ENCODE measurements at regions of chr12 and their contacts with region 1.

Region 1: DNA sequence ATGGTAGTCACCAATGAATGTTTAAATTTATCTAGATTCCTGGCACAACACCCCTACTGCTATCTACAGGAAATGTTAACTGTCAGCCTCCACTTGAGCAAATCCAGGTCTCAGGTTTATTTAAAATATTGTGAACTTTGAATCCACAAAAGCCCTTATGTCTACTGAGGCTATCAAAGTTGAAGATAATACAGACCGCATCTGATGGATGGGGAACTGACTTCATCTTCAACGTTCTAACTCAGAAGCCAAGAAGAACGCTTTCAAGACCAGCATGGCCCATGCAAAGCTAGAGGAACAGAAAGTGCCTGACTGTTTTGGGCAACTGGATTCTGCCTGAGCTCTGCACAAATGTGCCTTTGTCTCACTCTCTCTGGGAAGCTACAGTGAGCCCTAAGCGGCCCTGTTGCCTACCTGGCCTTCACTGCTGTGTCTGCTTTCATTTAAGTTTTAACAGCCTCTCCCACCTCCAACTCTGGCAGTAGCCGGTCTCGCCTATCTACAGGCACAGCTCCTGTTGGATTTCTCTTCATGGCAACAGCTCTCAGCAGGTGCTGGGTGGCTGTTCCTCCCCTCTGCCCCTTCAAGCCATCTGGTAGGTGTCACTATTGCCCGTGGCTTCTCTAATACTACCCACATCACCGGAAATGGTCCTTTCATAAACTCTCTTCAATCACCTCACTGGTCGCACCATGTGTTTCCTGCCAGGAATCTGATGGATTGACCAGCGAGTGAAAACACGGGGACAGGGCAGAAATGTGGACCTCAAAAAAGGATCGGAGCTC is 112.1 kb upstream of the OVCH1 start:
- DNase-seq: no peak
- H3K4me3 Mint-ChIP-seq: no peak overlapping the region
- H3K27ac Mint-ChIP-seq: no peak overlapping the region
- H3K4me1 Mint-ChIP-seq: no peaks in the 10 kb centered on the region
- H3K27me3 Mint-ChIP-seq: no peaks in the 10 kb centered on the region

Region 2: GRCh38 chr12:29844667-29845066 is 235.0 kb after region 1 on chr12:
- intact Hi-C with region 1: no loop called
- DNase-seq: no peak
- H3K4me3 Mint-ChIP-seq: no peak overlapping the region
- H3K27ac Mint-ChIP-seq: no peak overlapping the region
- H3K4me1 Mint-ChIP-seq: no peaks in the 10 kb centered on the region
- H3K27me3 Mint-ChIP-seq: no peaks in the 10 kb centered on the region

Region 3: DNA sequence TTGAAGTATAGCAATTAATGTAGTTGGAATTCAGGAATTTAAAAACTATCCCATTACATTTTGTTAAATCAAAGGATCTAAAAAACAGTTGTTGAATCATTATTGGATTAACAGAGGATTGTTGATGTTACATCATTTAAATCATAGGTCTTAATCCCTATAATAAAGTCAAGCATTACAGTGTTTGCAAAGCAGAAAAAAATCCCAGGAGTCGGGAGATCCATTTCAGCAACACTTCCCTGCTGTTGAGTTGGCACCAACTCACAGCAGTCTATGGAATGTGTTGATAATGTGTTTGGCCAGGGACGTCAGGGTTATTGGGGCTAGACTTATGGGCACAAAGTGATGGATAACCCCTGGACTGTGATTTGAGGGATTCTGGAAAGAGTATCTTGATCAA is 273.2 kb after region 1 on chr12:
- intact Hi-C with region 1: loop called (anchors 5 kb)
- DNase-seq: no peak
- H3K4me3 Mint-ChIP-seq: no peak overlapping the region
- H3K27ac Mint-ChIP-seq: no peak overlapping the region
- H3K4me1 Mint-ChIP-seq: no peaks in the 10 kb centered on the region
- H3K27me3 Mint-ChIP-seq: no peaks in the 10 kb centered on the region